Ovary (tissue), 10 donors: ENCODE measurements at regions of chrX and their contacts with region 1.

Region 1: GRCh38 chrX:21383546-21383945 is 9.3 kb downstream of the CNKSR2 start:
- DNase-seq: no peak
- H3K4me3 ChIP-seq: no peak overlapping the region
- H3K27ac ChIP-seq: no peak overlapping the region
- H3K4me1 ChIP-seq: no peaks in the 10 kb centered on the region
- H3K27me3 ChIP-seq: peaks cover 3% of the 10 kb centered on the region
- CTCF ChIP-seq: no peak
- EP300 ChIP-seq: no peak
- POLR2A ChIP-seq: no peak

Region 2: GRCh38 chrX:19684311-19684710 is 1699.2 kb before region 1 on chrX:
- intact Hi-C with region 1: no loop called
- DNase-seq: no peak
- H3K4me3 ChIP-seq: no peak overlapping the region
- H3K27ac ChIP-seq: no peak overlapping the region
- H3K4me1 ChIP-seq: no peaks in the 10 kb centered on the region
- H3K27me3 ChIP-seq: no peaks in the 10 kb centered on the region
- CTCF ChIP-seq: no peak
- EP300 ChIP-seq: no peak
- POLR2A ChIP-seq: no peak

Region 3: GRCh38 chrX:19772826-19773628 is 1610.5 kb before region 1 on chrX:
- intact Hi-C with region 1: no loop called
- DNase-seq: no peak
- H3K4me3 ChIP-seq: no peak overlapping the region
- H3K27ac ChIP-seq: no peak overlapping the region
- H3K4me1 ChIP-seq: peaks cover 2% of the 10 kb centered on the region
- H3K27me3 ChIP-seq: no peaks in the 10 kb centered on the region
- CTCF ChIP-seq: no peak
- EP300 ChIP-seq: no peak
- POLR2A ChIP-seq: no peak

Region 4: DNA sequence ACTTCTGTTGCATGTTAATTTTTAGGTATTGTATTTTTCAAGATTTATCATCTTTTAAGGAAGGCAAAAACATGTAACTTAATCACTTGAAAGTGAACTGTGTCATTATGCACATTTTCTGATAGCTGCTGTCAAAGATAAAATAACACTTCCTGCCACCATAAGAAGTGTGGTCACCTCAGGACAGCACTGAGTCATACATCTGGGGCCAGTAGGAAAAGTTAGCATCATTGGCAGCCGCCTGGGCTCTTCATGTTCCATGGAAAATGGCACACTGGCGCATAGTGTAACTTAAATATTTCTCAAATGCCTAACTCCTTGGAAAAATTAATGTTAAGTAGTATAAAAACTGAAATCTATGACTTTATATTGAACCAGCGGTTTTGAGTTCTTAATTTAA is 14.9 kb after region 1 on chrX:
- intact Hi-C with region 1: loop called in 1 of 4 experiments (anchors 1 kb)
- DNase-seq: no peak
- H3K4me3 ChIP-seq: no peak overlapping the region
- H3K27ac ChIP-seq: no peak overlapping the region
- H3K4me1 ChIP-seq: no peaks in the 10 kb centered on the region
- H3K27me3 ChIP-seq: no peaks in the 10 kb centered on the region
- CTCF ChIP-seq: no peak
- EP300 ChIP-seq: no peak
- POLR2A ChIP-seq: no peak